Activated T-helper 1 cell treated with anti-CD3 and anti-CD28 coated beads, Interleukin-12 subunit alpha, Interleukin-12 subunit beta, Interleukin-2, Interleukin-4 antibody, amounts not matched to agents 30 ng/mL and 10 ng/mL and 1 ng/mL, durations not matched to agents 14 hours and 24 hours and 36 hours (primary cell): ENCODE measurements at regions of chr4 and their contacts with region 1.

Region 1: DNA sequence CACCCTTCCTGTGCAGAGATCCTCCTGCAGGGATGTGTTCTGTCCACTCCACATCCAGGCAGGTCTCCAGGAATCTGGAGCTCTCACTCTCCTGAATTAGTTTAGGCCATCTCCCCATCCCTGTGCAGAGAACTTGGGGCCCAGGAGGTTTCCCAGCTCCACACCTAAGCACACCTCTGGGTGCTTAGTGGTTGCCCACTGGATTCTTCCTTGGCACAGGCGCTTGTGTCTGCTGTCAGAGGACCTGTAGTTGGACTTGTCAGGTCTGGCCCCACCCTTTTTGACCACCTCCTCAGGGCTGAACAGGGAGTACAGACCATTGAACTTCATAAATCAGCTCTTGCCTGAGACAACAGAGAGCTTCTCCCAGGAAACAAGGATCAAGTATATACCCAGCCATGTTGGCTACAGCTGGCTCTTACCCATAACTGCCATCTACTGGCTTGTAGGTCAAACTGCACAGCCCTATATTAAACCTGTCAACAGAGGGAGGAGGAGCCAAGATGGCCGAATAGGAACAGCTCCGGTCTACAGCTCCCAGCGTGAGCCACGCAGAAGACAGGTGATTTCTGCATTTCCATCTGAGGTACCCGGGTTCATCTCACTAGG is 275.5 kb downstream of the PPARGC1A start:
- DNase-seq: no peak
- H3K4me3 Mint-ChIP-seq: no peak overlapping the region
- H3K27ac Mint-ChIP-seq: no peak overlapping the region
- H3K4me1 Mint-ChIP-seq: no peaks in the 10 kb centered on the region
- H3K27me3 Mint-ChIP-seq: no peaks in the 10 kb centered on the region

Region 2: DNA sequence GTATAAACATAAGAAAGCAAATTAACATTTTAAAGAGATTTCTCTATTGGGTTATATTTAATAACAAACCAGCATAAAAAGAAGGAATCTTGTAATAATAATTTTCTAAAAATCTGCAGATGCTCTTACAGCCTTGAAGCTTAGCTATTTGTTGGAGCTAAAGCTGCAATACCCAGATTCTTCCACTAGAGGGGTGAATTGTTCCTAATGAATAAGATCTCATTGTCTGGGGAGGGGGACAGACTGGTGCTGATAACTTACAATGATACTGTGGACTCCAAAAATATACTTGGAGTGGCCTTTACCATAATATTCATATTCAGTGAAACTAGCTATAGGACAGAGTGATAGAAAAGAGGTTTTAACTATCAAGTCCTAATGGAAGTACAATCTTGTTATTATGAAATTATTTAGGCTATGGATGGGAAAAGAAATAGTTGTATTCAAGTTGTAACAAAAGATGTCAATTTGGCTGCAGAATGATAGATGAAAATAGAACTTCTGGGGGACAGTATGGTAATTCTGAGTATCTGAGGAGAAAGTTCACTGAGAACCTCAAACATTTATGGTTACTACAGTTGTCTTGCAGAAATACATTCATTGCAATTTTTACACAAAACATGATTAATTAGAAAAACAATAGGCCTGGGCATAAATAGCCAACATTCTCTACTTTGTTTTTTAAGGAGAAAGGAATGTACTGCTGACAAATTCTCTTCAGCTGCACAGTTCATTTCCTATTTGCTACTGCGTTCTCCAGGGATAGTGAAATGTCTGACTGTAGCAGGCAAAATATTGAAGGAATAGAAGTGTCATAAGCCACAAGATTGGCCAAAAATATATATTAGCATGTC is 478.4 kb before region 1 on chr4:
- intact Hi-C with region 1: loop called (anchors 5 kb)
- DNase-seq: no peak
- H3K4me3 Mint-ChIP-seq: no peak overlapping the region
- H3K27ac Mint-ChIP-seq: no peak overlapping the region
- H3K4me1 Mint-ChIP-seq: no peaks in the 10 kb centered on the region
- H3K27me3 Mint-ChIP-seq: no peaks in the 10 kb centered on the region

Region 3: DNA sequence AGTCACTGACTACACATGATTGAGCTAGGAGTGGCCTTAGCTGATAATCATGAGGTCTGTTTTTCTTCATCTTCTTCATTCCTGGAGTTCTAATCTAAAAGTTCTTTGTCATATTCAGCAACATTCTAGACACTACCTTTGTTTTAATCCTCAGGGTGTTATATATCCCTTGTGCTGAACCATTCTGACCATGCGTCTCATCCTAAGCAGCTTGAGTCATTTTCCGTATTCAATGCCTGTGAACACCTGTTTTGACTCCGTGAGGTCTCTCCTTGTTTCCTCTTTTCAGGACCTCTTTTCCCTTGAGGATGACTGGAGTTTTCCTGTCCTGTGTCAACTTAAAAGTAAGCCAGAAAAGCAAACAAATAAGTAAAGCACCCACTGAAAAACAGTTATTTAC is 323.7 kb before region 1 on chr4:
- intact Hi-C with region 1: loop called (anchors 10 kb)
- DNase-seq: no peak
- H3K4me3 Mint-ChIP-seq: no peak overlapping the region
- H3K27ac Mint-ChIP-seq: no peak overlapping the region
- H3K4me1 Mint-ChIP-seq: peaks cover 17% of the 10 kb centered on the region
- H3K27me3 Mint-ChIP-seq: peaks cover 5% of the 10 kb centered on the region

Region 4: GRCh38 chr4:23560748-23561147 is 53.6 kb before region 1 on chr4:
- intact Hi-C with region 1: no loop called
- DNase-seq: no peak
- H3K4me3 Mint-ChIP-seq: no peak overlapping the region
- H3K27ac Mint-ChIP-seq: no peak overlapping the region
- H3K4me1 Mint-ChIP-seq: no peaks in the 10 kb centered on the region
- H3K27me3 Mint-ChIP-seq: no peaks in the 10 kb centered on the region

Region 5: GRCh38 chr4:23582671-23583070 is 31.7 kb before region 1 on chr4:
- intact Hi-C with region 1: no loop called
- DNase-seq: no peak
- H3K4me3 Mint-ChIP-seq: no peak overlapping the region
- H3K27ac Mint-ChIP-seq: no peak overlapping the region
- H3K4me1 Mint-ChIP-seq: no peaks in the 10 kb centered on the region
- H3K27me3 Mint-ChIP-seq: no peaks in the 10 kb centered on the region

Region 6: GRCh38 chr4:24007860-24008261 is 393.5 kb after region 1 on chr4:
- intact Hi-C with region 1: no loop called
- DNase-seq: no peak
- H3K4me3 Mint-ChIP-seq: no peak overlapping the region
- H3K27ac Mint-ChIP-seq: no peak overlapping the region
- H3K4me1 Mint-ChIP-seq: no peaks in the 10 kb centered on the region
- H3K27me3 Mint-ChIP-seq: peaks cover 6% of the 10 kb centered on the region